Activated CD4-positive, alpha-beta memory T cell treated with anti-CD3 and anti-CD28 coated beads for 36 hours (primary cell): ENCODE measurements at regions of chr9 and their contacts with region 1.

Region 1: DNA sequence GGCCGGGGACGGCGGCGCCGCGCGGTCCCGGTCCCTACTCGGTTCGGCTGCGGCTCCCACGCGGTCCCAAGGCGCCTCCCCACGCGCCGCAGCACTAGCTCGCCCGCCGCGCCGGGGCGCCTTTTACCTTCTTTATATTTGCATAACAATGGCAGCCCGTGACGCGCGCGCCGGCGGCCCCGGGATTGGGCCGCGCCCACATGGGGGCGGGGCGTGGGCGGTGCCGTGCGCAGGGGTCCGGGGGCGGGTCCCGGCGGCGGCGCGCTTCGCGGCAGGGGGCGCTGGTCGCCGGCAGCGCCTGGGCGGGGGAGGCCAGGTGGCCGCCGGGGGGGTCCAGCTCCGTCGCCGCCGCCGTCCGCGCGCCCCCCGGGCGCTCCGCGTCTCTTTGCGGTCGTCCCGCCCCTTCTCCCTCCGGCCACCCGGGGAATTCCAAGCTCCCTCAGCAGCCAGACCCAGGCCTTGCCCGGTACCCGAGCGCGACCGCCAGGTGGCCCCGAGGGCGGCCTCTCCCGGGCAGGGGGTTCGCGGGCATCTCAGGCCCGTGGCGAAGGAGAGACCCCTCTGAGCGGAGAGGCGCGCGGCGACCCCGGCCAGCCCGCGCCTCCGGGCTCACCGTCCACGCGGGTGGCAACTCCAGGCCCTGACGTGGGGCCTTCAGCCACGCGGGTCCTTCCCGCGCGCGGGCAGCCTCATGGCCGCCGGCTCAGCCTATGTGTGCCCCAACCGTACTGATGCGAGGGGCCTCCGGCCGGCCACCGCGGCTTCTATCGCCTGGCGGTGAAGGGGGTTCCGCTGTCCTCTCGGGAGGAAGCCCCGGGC is at the start of gene NRARP:
- DNase-seq: peak; percentile 92
- H3K4me3 Mint-ChIP-seq: peak within 1 kb of the TSS; percentile 68
- H3K27ac Mint-ChIP-seq: no peak within 1 kb of the TSS
- H3K4me1 Mint-ChIP-seq: peaks cover 12% of the 10 kb centered on the region
- H3K27me3 Mint-ChIP-seq: peaks cover 18% of the 10 kb centered on the region
- total RNA-seq, gene NRARP: 0.82 to 1.1 TPM

Region 2: GRCh38 chr9:137353223-137354152 is 51.1 kb after region 1 on chr9:
- CTCF ChIA-PET with region 1: no interaction called
- POLR2A ChIA-PET with region 1: no interaction called
- intact Hi-C with region 1: no loop called
- DNase-seq: no peak
- H3K4me3 Mint-ChIP-seq: no peak overlapping the region
- H3K27ac Mint-ChIP-seq: no peak overlapping the region
- H3K4me1 Mint-ChIP-seq: no peaks in the 10 kb centered on the region
- H3K27me3 Mint-ChIP-seq: no peaks in the 10 kb centered on the region

Region 3: GRCh38 chr9:137406876-137407589 is 104.6 kb after region 1 on chr9:
- CTCF ChIA-PET with region 1: interaction called, 9 read pairs
- POLR2A ChIA-PET with region 1: no interaction called
- intact Hi-C with region 1: loop called (anchors 2 kb)
- DNase-seq: peak; percentile 77
- H3K4me3 Mint-ChIP-seq: no peak overlapping the region
- H3K27ac Mint-ChIP-seq: no peak overlapping the region
- H3K4me1 Mint-ChIP-seq: peaks cover 2% of the 10 kb centered on the region
- H3K27me3 Mint-ChIP-seq: peaks cover 3% of the 10 kb centered on the region